ENCODE measurements at regions of chr9 and their contacts with region 1.

Region 1: GRCh38 chr9:4984621-4985385 is at the start of gene JAK2:
- DNase-seq: peak; percentile 96
- H3K4me3 ChIP-seq: peak within 1 kb of the TSS; percentile 63 to 86 (median 79)
- H3K27ac ChIP-seq: peak within 1 kb of the TSS; percentile 90
- H3K4me1 ChIP-seq: peaks cover 36% of the 10 kb centered on the region
- H3K27me3 ChIP-seq: no peaks in the 10 kb centered on the region
- CTCF ChIP-seq: peak; percentile 23 to 61
- POLR2A ChIP-seq: peak; percentile 76
- total RNA-seq, gene JAK2: 9.7 and 10.3 TPM in 2 replicates

Region 2: GRCh38 chr9:4750023-4750673 is 234.7 kb before region 1 on chr9:
- CTCF ChIA-PET with region 1: interaction called, 215 read pairs
- POLR2A ChIA-PET with region 1: no interaction called
- dilution Hi-C with region 1: no loop called
- intact Hi-C with region 1: no loop called
- DNase-seq: peak; percentile 57
- H3K4me3 ChIP-seq: no peak overlapping the region
- H3K27ac ChIP-seq: no peak overlapping the region
- H3K4me1 ChIP-seq: no peaks in the 10 kb centered on the region
- H3K27me3 ChIP-seq: no peaks in the 10 kb centered on the region
- CTCF ChIP-seq: peak; percentile 32 to 42
- POLR2A ChIP-seq: no peak

Region 3: DNA sequence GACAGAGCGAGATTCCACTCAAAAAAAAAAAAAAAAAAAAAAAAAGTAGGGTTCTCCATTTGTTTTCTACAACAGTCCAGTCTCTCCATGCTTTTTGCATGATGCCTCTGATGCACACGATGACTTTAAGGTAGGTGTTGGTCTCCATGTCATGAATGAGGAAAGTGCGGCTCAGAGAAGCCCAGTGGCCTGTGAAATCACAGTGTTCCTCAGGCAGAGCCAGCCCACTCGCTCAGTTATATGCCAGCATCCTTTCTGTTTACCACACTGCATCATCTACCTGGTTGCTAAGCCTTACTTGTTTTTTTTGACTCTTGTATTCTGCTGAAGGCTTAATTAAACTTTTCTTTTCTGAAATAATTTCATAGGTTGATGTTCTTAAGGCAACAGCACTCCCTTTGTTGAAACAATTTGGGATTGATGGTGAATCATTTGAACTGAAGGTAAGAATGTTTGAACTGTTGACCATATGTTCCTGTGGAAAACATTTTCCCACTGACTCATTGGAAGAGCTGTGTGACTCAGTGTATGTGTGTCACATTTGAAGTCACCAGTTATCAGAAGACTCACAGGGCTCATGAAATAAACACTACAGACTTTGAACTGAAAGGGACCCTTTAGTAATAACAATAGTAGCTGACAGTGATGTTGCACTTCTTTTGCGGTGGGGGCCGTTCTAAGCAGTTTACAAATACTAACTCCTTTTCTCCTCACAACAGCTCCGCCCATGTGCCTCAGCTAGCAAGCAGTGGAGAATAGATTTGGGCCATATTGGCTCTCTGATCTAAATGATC is 151.8 kb before region 1 on chr9:
- CTCF ChIA-PET with region 1: interaction called, 6 read pairs
- POLR2A ChIA-PET with region 1: no interaction called
- dilution Hi-C with region 1: no loop called
- intact Hi-C with region 1: loop called (anchors 1 kb)
- DNase-seq: peak; percentile 98
- H3K4me3 ChIP-seq: peak overlapping the region in 1 of 3 experiments; percentile 44
- H3K27ac ChIP-seq: peak overlapping the region; percentile 99
- H3K4me1 ChIP-seq: peaks cover 46% of the 10 kb centered on the region
- H3K27me3 ChIP-seq: no peaks in the 10 kb centered on the region
- CTCF ChIP-seq: no peak
- POLR2A ChIP-seq: peak; percentile 41

Region 4: DNA sequence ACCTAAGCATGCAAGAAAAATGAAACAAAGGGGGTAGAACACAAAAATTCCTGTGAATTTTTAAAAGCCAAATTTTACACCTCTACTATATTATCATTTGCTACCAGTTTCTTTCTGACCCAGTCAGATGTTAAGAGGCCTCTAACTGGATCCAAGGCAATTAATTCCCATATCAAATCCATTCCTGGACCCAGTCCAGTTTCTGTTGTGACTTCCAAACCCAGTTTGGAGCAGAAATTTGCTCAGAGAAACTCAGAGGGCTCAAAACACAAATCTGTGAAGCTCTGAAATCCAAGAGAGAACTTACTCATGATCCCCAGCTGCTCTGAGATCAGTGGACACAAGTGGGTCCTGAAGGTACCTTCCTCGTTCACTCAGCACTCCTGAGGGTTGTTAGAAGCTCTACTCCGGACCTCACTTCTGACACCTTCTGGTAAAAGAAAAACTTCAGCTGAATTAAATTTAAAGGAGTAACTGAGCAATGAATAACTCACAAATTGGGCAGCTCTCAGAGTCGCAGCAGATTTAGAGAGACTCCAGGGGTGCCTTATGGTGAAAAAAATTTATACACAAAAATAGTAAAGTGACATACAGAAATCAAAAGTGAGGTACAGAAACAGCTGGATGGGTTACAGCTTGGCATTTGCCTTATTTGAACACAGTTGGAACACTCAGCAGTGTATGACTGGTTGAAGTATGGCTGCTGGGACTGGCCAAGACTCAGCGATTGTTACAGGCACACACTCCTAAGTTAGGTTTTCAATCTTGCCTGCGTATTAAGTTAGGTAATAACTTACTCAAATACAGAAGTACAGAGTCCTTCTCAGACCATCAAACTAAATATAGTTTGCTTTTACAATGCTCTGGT is 278.8 kb after region 1 on chr9:
- CTCF ChIA-PET with region 1: no interaction called
- POLR2A ChIA-PET with region 1: no interaction called
- dilution Hi-C with region 1: no loop called
- intact Hi-C with region 1: loop called (anchors 1 kb)
- DNase-seq: peak; percentile 47
- H3K4me3 ChIP-seq: no peak overlapping the region
- H3K27ac ChIP-seq: no peak overlapping the region
- H3K4me1 ChIP-seq: peaks cover 7% of the 10 kb centered on the region
- H3K27me3 ChIP-seq: no peaks in the 10 kb centered on the region
- CTCF ChIP-seq: no peak
- POLR2A ChIP-seq: no peak

Region 5: GRCh38 chr9:5278486-5278885 is 293.7 kb after region 1 on chr9:
- CTCF ChIA-PET with region 1: no interaction called
- POLR2A ChIA-PET with region 1: no interaction called
- dilution Hi-C with region 1: no loop called
- intact Hi-C with region 1: no loop called
- DNase-seq: no peak
- H3K4me3 ChIP-seq: no peak overlapping the region
- H3K27ac ChIP-seq: no peak overlapping the region
- H3K4me1 ChIP-seq: no peaks in the 10 kb centered on the region
- H3K27me3 ChIP-seq: no peaks in the 10 kb centered on the region
- CTCF ChIP-seq: no peak
- POLR2A ChIP-seq: no peak